Activated T-helper 2 cell treated with anti-CD3 and anti-CD28 coated beads, Interferon-gamma antibody, Interleukin-2, Interleukin-4, amounts not matched to agents 10 μg/mL and 5 μg/mL and 100 μg/mL, durations not matched to agents 14 hours and 24 hours and 36 hours (primary cell): ENCODE measurements at regions of chr3 and their contacts with region 1.

Region 1: GRCh38 chr3:70550723-70551319 is 238.4 kb upstream of the MDFIC2 start:
- DNase-seq: peak; percentile 44
- H3K4me3 Mint-ChIP-seq: no peak overlapping the region
- H3K27ac Mint-ChIP-seq: no peak overlapping the region
- H3K4me1 Mint-ChIP-seq: no peaks in the 10 kb centered on the region
- H3K27me3 Mint-ChIP-seq: peaks cover 22% of the 10 kb centered on the region

Region 2: GRCh38 chr3:70565861-70566260 is 15.0 kb after region 1 on chr3:
- intact Hi-C with region 1: no loop called
- DNase-seq: no peak
- H3K4me3 Mint-ChIP-seq: no peak overlapping the region
- H3K27ac Mint-ChIP-seq: no peak overlapping the region
- H3K4me1 Mint-ChIP-seq: no peaks in the 10 kb centered on the region
- H3K27me3 Mint-ChIP-seq: peaks cover 13% of the 10 kb centered on the region

Region 3: GRCh38 chr3:70951316-70951715 is 400.5 kb after region 1 on chr3:
- intact Hi-C with region 1: loop called (anchors 5 kb)
- DNase-seq: no peak
- H3K4me3 Mint-ChIP-seq: no peak overlapping the region
- H3K27ac Mint-ChIP-seq: no peak overlapping the region
- H3K4me1 Mint-ChIP-seq: no peaks in the 10 kb centered on the region
- H3K27me3 Mint-ChIP-seq: no peaks in the 10 kb centered on the region